PC-9 (cell line): ENCODE measurements at regions of chr10 and their contacts with region 1.

Region 1: GRCh38 chr10:11724938-11725776 is 17.0 kb upstream of the ECHDC3 start:
- DNase-seq: peak; percentile 24 to 58
- H3K4me3 ChIP-seq: no peak overlapping the region
- H3K27ac ChIP-seq: no peak overlapping the region
- H3K4me1 ChIP-seq: peaks cover 5% of the 10 kb centered on the region
- H3K27me3 ChIP-seq: no peaks in the 10 kb centered on the region
- CTCF ChIP-seq: peak; percentile 75

Region 2: DNA sequence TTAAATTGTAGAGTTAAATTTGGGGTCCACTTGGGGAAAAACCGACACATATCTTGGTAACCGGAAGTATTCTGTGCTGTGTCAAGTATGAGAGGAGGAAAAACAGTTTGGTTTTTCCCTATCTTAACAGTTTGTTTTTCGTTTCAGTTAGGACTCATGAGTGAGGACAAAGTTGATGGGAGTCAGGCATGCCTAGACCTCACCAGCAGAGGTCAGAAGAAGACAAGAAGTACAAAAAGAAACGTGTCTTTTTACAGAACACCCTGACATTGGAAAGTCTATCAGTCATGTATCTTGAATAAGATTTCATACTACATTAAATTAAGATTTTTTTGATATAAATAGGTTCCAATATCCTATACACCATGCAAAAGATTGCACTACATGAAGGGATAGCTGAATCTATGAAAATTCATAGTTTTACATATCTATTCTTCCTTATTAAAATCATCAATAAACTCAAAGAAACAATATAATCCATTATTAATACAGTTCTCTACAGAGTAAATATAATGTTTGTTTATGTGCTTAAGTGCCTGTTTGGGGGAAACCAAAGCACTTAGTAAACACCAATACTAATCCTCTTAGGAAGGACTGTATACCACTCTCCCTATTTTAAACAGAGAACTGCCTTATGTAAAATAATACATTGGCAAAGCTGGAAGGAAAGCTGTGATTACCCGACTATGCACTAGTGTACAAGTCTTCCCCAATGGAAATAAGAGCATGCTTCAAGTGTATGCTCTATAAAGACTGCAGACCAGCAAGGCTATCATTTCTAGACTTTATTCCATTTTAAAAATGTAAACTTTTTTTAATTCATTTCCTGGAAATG is 209.3 kb before region 1 on chr10:
- CTCF ChIA-PET with region 1: interaction called, 3 read pairs
- POLR2A ChIA-PET with region 1: no interaction called
- intact Hi-C with region 1: loop called (anchors 1 kb)
- DNase-seq: peak in 1 of 2 experiments; percentile 25
- H3K4me3 ChIP-seq: no peak overlapping the region
- H3K27ac ChIP-seq: 0 out of 2 replicates have a peak overlapping the region, but pooled peaks have one; percentile 17
- H3K4me1 ChIP-seq: no peaks in the 10 kb centered on the region
- H3K27me3 ChIP-seq: no peaks in the 10 kb centered on the region
- CTCF ChIP-seq: peak; percentile 82

Region 3: GRCh38 chr10:11647676-11648075 is 77.5 kb before region 1 on chr10:
- CTCF ChIA-PET with region 1: no interaction called
- POLR2A ChIA-PET with region 1: interaction called, 21 read pairs
- intact Hi-C with region 1: no loop called
- DNase-seq: no peak
- H3K4me3 ChIP-seq: no peak overlapping the region
- H3K27ac ChIP-seq: no peak overlapping the region
- H3K4me1 ChIP-seq: peaks cover 4% of the 10 kb centered on the region; the same call in 1 of the 2 replicates
- H3K27me3 ChIP-seq: no peaks in the 10 kb centered on the region
- CTCF ChIP-seq: no peak

Region 4: GRCh38 chr10:11772575-11773288 is 47.6 kb after region 1 on chr10:
- CTCF ChIA-PET with region 1: no interaction called
- POLR2A ChIA-PET with region 1: no interaction called
- intact Hi-C with region 1: no loop called
- DNase-seq: no peak
- H3K4me3 ChIP-seq: no peak overlapping the region
- H3K27ac ChIP-seq: no peak overlapping the region
- H3K4me1 ChIP-seq: peaks cover 10% of the 10 kb centered on the region; the same call in 1 of the 2 replicates
- H3K27me3 ChIP-seq: no peaks in the 10 kb centered on the region
- CTCF ChIP-seq: no peak